ENCODE measurements at regions of chr3 and their contacts with region 1.

Region 1: DNA sequence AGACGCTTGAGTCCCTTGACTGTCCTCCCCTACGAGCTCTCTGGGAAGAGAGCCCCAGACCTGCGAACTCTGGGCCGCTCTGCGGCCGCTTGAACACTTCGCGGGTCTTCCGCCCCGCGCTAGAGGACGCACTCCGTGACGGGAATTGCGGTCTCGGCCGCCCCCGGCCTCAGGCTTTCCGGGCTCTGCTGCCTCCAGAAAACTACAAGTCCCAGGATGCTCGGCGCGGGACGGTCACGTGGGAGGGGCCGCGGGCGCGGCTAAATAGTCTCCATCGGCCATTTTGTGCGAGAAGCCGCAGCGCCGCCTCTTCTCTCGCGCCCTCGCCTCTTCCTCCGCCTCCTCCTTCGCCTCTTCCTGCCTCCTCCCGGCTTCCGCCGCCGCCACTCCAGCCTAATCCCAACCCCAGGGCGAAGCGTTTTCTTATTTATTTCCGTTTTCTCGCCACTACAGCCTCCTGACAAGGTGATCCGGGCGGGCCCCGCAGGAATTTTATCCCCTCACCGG is at the start of gene EIF1B:
- DNase-seq: peak; percentile 99
- ATAC-seq: peak; percentile 94 to 98 (median 97)
- H3K4me3 ChIP-seq: peak within 1 kb of the TSS; percentile 65 to 98 (median 90)
- H3K27ac ChIP-seq: peak within 1 kb of the TSS; percentile 90 to 100 (median 98)
- H3K4me1 ChIP-seq: peaks cover 0 to 54% (median 43%) of the 10 kb centered on the region in 9 donors
- H3K27me3 ChIP-seq: no peaks in the 10 kb centered on the region
- CTCF ChIP-seq: peak; percentile 84 to 99 (median 94)
- total RNA-seq, gene EIF1B: 203 to 381 (median 303) TPM

Region 2: GRCh38 chr3:39406368-39407258 is 902.9 kb before region 1 on chr3 and contains the start of gene RPSA:
- intact Hi-C with region 1: loop called in 1 of 10 experiments (anchors 5 kb)
- DNase-seq: peak; percentile 90 to 93
- ATAC-seq: peak; percentile 95 to 99 (median 98)
- H3K4me3 ChIP-seq: peak within 1 kb of the TSS; percentile 64 to 87 (median 72)
- H3K27ac ChIP-seq: peak within 1 kb of the TSS; percentile 14 to 90 (median 82)
- H3K4me1 ChIP-seq: peaks cover 2 to 45% (median 22%) of the 10 kb centered on the region in 9 donors
- H3K27me3 ChIP-seq: no peaks in the 10 kb centered on the region
- CTCF ChIP-seq: peak in 8 of 9 donors; percentile 8 to 57 (median 34)
- total RNA-seq, gene RPSA: 350 to 651 (median 384) TPM

Region 3: DNA sequence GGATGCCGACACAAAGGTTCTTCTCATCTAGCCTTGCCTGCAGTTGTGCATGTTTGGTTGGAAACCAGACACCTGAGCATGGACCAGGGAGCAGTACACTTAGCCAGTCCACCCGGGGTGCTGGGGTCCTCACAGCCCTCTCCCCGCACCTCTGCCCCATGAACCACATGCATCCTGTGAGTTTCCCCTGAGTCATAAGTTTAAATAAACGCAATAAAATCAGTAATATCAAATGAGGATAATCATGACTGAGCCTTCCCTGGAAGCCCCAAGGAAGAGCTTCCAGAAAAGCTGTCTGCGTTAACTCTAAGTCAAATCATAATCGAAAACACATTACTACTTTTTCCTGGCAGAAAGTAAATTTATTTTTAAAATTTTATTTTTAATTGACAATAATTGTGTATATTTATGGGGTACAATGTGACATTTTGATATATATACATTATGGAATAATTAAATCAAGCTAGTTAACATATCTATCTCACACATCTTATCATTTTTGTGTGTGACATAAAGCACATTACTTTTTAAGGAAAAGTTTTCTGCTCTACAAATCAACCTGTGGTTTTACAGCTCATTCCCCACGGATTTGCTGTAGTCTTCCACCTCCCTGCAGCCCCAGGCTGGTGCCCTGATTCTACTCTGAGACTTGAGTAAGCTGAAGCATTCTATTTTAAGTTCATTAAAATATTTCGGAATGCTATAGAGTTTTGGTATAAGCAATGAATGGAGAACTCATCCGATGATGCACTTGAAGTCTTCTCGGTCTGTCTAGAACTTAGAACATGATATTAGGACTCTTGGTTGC is 166.0 kb before region 1 on chr3:
- intact Hi-C with region 1: no loop called
- DNase-seq: no peak
- ATAC-seq: no peak
- H3K4me3 ChIP-seq: no peak overlapping the region
- H3K27ac ChIP-seq: no peak overlapping the region
- H3K4me1 ChIP-seq: no peaks in the 10 kb centered on the region
- H3K27me3 ChIP-seq: no peaks in the 10 kb centered on the region
- CTCF ChIP-seq: no peak

Region 4: DNA sequence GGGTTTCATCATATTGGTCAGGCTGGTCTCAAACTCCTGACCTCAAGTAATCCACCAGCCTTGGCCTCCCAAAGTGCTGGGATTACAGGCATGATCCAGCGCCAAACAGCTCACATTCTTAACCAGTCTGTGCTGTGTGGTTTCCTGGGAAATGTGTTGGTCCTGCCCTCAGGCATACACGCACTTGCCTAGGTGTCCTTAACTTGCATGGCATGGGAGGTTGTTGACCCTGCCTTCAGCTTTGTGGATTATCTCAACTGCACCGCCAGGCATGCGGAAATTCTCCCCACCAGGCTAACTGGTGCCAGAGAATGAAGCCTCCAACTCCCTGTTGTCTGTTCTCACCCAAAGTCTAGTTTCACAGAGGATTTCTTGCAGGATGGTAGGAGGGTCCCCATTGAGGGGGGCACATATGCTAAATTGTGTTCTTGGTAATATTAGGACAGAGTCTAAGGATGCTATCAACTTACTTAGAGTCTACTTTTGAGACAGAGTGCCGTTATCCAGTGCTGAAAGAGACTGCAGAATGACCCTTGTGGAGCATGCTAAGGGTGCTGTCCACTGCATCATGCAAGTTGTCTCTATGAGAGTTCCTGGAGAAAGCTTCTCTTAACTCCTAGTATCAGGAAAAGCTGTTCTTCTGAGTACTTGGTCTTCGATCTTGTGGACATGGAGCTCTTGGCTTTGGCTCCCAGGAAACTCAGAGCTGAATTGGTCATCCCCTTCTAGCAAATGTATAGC is 61.6 kb before region 1 on chr3:
- intact Hi-C with region 1: loop called in 3 of 10 experiments (anchors 2 to 5 kb)
- DNase-seq: no peak
- ATAC-seq: peak in 3 of 8 donors; percentile 39 to 49 (median 44)
- H3K4me3 ChIP-seq: no peak overlapping the region
- H3K27ac ChIP-seq: peak overlapping the region in 2 of 10 donors; percentile 71 to 76
- H3K4me1 ChIP-seq: peaks cover 0 to 9% (median 3%) of the 10 kb centered on the region in 9 donors
- H3K27me3 ChIP-seq: no peaks in the 10 kb centered on the region
- CTCF ChIP-seq: no peak